ENCODE measurements at regions of chr1 and their contacts with region 1.

Region 1: DNA sequence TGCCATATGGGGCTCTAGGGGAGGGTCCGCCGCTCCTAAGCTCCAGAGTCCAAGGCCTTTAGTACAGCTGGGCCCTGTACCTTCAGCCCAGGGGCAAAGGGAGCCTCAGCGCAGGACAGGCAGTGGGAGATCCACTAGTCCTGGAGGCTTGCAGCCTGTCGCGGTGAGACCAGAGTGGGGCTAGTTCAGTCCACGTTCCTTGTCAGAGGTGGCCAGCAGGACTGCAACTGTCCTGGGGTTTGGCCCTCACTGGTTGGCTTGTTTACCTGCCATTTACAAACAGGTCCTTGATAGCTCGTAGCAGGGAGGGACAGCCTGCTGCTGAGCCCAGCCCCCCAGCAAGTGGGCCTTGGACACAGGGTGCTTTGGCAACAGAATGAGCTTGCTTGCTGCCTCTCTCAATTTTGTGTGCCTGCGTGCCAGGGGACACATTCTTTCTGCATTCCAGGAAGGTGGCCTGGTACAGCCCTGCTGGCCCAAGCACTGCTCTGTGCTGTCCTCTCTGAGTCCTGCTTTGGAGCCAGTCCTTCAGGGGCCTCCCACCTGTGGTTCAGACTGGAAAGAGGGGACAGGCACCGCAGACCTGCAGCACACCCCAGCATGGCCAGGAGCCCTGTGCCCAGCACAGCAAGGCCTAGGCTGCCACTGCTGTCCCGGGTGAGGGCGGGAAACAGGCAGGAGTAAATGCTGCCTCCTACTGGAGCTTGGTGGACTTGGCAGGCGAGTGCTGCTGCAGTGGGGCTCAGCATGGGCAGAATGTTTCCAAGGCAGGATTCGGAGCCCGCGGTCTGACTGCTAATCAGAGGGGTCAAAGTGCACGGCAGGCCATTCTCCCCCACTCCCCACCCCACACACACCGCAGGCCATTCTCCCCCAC is 15.2 kb downstream of the H6PD start:
- DNase-seq: no peak
- H3K4me3 ChIP-seq: no peak overlapping the region
- H3K27ac ChIP-seq: no peak overlapping the region
- H3K4me1 ChIP-seq: no peaks in the 10 kb centered on the region
- H3K27me3 ChIP-seq: no peaks in the 10 kb centered on the region
- CTCF ChIP-seq: peak; percentile 63 to 72

Region 2: GRCh38 chr1:9093581-9093980 is 156.2 kb before region 1 on chr1:
- CTCF ChIA-PET with region 1: no interaction called
- dilution Hi-C with region 1: no loop called
- in situ Hi-C with region 1: no loop called
- intact Hi-C with region 1: no loop called
- DNase-seq: no peak
- H3K4me3 ChIP-seq: no peak overlapping the region
- H3K27ac ChIP-seq: no peak overlapping the region
- H3K4me1 ChIP-seq: no peaks in the 10 kb centered on the region
- H3K27me3 ChIP-seq: no peaks in the 10 kb centered on the region
- CTCF ChIP-seq: no peak

Region 3: GRCh38 chr1:9110669-9111356 is 139.0 kb before region 1 on chr1:
- CTCF ChIA-PET with region 1: no interaction called
- dilution Hi-C with region 1: no loop called
- in situ Hi-C with region 1: no loop called
- intact Hi-C with region 1: loop called (anchors 1 kb)
- DNase-seq: peak; percentile 97
- H3K4me3 ChIP-seq: no peak overlapping the region
- H3K27ac ChIP-seq: no peak overlapping the region
- H3K4me1 ChIP-seq: peaks cover 13% of the 10 kb centered on the region
- H3K27me3 ChIP-seq: no peaks in the 10 kb centered on the region
- CTCF ChIP-seq: peak; percentile 87 to 93

Region 4: DNA sequence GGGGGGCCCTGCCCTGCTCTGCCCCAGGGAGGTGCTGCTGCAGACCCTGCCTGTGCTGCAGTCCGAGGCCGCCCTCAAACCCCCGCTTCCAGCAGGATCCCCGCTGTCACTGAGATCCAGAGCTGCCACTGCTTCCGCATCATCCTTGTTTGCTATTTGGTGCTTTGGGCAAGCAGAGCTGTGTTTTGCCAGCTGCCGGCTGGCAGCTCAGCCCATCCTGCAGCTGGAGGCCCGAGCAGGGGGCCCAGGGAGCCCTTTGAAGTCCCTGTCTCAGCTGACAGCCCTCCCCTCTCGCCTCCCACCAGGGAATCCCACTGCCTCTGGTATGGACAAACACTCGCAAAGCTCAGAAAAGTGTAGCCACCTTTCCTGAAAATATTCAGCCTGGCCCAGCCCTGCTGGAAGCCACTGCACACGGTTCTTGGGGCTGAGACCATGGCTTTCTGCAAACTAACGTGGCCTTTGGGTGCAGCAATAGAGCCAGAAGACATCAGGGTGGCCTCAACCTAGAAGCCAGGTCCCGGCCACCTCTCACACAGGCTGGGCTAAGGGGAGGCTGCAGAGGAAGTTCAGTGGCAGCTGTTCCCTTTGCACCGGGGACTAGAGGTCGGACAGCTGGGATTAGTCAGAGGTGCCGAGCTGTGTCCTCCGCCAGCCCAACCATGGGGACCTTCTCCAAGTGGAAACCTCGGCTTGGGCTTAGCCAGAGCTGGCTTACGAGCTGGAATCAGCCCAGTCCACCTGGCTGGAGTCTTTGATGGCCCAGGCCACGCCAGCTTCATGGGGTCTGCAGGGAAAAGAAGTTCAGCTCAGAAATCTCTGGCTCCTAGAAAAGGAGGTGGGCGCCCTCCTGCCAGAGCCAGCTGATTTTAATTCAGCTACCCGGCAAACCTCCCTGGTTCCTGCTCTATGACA is 150.0 kb after region 1 on chr1:
- CTCF ChIA-PET with region 1: no interaction called
- dilution Hi-C with region 1: no loop called
- in situ Hi-C with region 1: no loop called
- intact Hi-C with region 1: no loop called
- DNase-seq: no peak
- H3K4me3 ChIP-seq: no peak overlapping the region
- H3K27ac ChIP-seq: no peak overlapping the region
- H3K4me1 ChIP-seq: peaks cover 7% of the 10 kb centered on the region
- H3K27me3 ChIP-seq: no peaks in the 10 kb centered on the region
- CTCF ChIP-seq: no peak

Measured in mammary epithelial cell (primary cell).